CD4-positive, alpha-beta memory T cell (primary cell): ENCODE measurements at regions of chr18 and their contacts with region 1.

Region 1: GRCh38 chr18:63131106-63131958 is 188.2 kb downstream of the BCL2 start:
- DNase-seq: peak; percentile 61 to 73 (median 69)
- H3K4me3 ChIP-seq: no peak overlapping the region
- H3K4me3 Mint-ChIP-seq: peak overlapping the region in 5 of 8 donors; percentile 2 to 78 (median 53)
- H3K27ac ChIP-seq: peak overlapping the region; percentile 13
- H3K27ac Mint-ChIP-seq: peak overlapping the region; percentile 84 to 90 (median 89)
- H3K4me1 ChIP-seq: peaks cover 34% of the 10 kb centered on the region
- H3K4me1 Mint-ChIP-seq: peaks cover 31 to 47% (median 34%) of the 10 kb centered on the region in 4 donors
- H3K27me3 ChIP-seq: no peaks in the 10 kb centered on the region
- H3K27me3 Mint-ChIP-seq: no peaks in the 10 kb centered on the region

Region 2: DNA sequence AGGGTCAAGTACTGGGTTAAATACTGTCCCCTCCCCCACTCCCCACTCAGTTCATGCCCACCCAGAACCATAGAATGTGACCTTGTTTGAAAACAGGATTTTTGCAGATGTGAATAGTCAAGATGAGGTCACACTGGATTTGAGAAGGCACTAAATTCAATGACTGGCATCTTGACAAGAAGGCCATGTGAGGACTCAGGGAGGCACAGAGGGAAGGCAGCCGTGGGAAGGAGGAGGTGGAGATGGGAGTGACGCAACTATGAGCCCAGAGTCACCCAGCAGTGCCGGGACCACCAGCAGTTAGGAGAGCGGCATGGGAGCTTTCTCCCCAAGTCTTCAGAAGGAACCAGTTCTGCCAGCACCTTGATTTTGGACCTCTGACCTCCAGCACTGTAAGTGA is 69.1 kb before region 1 on chr18:
- CTCF ChIA-PET with region 1: no interaction called
- POLR2A ChIA-PET with region 1: no interaction called
- intact Hi-C with region 1: no loop called
- DNase-seq: no peak
- H3K4me3 ChIP-seq: no peak overlapping the region
- H3K4me3 Mint-ChIP-seq: no peak overlapping the region
- H3K27ac ChIP-seq: no peak overlapping the region
- H3K27ac Mint-ChIP-seq: no peak overlapping the region
- H3K4me1 ChIP-seq: no peaks in the 10 kb centered on the region
- H3K4me1 Mint-ChIP-seq: no peaks in the 10 kb centered on the region
- H3K27me3 ChIP-seq: no peaks in the 10 kb centered on the region
- H3K27me3 Mint-ChIP-seq: peaks cover 5% of the 10 kb centered on the region in 2 donors

Region 3: GRCh38 chr18:63119647-63120046 is 11.7 kb before region 1 on chr18:
- CTCF ChIA-PET with region 1: interaction called, 11 read pairs
- POLR2A ChIA-PET with region 1: interaction called, 4 read pairs
- intact Hi-C with region 1: no loop called
- DNase-seq: no peak
- H3K4me3 ChIP-seq: no peak overlapping the region
- H3K4me3 Mint-ChIP-seq: no peak overlapping the region
- H3K27ac ChIP-seq: no peak overlapping the region
- H3K27ac Mint-ChIP-seq: peak overlapping the region in 1 of 7 donors; percentile 82
- H3K4me1 ChIP-seq: no peaks in the 10 kb centered on the region
- H3K4me1 Mint-ChIP-seq: peaks cover 3 to 9% (median 4%) of the 10 kb centered on the region in 4 donors
- H3K27me3 ChIP-seq: no peaks in the 10 kb centered on the region
- H3K27me3 Mint-ChIP-seq: peaks cover 0 to 3% of the 10 kb centered on the region in 2 donors

Region 4: DNA sequence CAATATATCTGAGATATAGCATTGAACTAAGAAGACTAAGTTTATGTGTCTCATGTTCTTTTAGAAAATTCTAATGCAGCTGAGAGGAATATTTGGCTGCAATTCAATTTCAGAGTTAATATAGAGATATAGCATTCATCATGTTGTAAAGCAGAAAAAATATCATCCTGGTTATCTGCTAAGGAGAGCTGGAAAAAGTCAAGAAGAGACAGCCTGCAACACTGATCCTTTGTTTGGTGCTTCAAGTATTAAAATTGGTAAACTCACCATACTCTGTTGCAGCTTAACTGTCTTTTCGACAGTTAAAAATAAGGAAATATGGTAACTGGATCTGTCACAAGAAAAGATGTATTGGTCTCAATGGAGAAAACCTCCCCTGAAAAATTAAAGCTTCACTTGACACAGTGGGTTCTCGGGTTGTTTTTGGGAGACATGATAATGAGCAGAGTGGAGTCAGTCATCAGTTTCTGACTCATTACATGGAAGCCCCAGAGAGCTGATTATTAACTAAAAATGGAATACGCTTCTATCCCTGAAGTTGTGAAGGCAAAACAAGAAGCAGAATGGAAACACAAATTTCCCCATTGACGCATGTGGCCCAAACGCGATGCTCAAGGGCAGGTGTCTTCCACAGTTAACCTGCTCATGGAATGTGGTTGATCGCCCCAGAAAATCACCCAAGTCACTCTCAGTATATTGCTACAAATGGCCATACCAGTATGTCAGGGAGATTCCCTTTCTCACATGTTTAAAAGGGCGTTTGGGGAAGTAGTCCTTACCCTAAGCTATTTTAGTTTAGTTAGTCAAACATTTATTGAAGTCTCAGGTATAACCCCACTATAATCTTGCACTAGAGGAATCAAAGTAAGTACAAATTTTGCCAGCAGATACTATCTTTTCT is 180.0 kb after region 1 on chr18:
- CTCF ChIA-PET with region 1: interaction called, 11 read pairs
- POLR2A ChIA-PET with region 1: interaction called, 5 read pairs
- intact Hi-C with region 1: no loop called
- DNase-seq: no peak
- H3K4me3 ChIP-seq: no peak overlapping the region
- H3K4me3 Mint-ChIP-seq: peak overlapping the region in 7 of 8 donors; percentile 26 to 92 (median 69)
- H3K27ac ChIP-seq: peak overlapping the region; percentile 14
- H3K27ac Mint-ChIP-seq: peak overlapping the region; percentile 51 to 94 (median 80)
- H3K4me1 ChIP-seq: peaks cover 96% of the 10 kb centered on the region
- H3K4me1 Mint-ChIP-seq: peaks cover 61 to 96% (median 82%) of the 10 kb centered on the region in 4 donors
- H3K27me3 ChIP-seq: no peaks in the 10 kb centered on the region
- H3K27me3 Mint-ChIP-seq: no peaks in the 10 kb centered on the region

Region 5: DNA sequence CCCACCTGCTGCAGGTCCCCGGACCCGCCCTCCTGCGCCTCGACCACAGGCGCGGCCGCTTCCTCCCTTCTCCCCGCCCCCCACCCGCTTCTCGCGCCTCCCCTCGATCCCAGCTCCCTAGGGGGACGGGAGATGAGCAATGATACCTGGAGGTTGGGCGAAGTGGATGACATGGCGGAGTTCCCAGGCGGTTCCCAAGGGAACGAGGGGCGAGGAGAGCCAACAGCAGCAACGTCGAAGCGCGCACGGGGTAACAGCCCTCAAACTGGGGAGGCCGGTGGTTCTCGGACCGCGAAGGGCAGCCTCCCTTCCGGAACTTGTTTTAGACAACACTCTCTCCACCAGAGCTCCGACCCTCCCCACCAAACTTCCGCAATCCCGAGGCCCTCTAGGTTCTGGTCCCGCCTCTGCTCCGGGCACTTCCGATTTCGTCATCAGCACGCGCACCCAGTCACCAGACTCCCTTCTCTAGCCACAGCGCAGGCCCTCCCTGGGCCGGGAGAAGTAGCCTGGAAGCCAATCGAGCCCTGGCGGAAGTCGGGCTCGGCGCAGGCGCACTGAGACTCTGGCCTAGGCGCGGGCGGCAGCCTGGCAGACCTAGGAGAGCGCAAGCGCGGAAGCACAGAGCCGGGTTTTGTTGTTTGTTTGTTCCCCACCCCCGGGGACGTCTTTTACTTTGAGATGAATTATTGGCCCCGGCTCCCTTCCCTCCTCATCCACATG is 290.9 kb after region 1 on chr18 and contains the start of gene VPS4B:
- CTCF ChIA-PET with region 1: interaction called, 5 read pairs
- POLR2A ChIA-PET with region 1: interaction called, 5 read pairs
- intact Hi-C with region 1: loop called (anchors 5 kb)
- DNase-seq: peak; percentile 99 to 100 (median 100)
- H3K4me3 ChIP-seq: peak within 1 kb of the TSS; percentile 73 to 98
- H3K4me3 Mint-ChIP-seq: peak within 1 kb of the TSS; percentile 94 to 100 (median 96)
- H3K27ac ChIP-seq: peak within 1 kb of the TSS; percentile 98
- H3K27ac Mint-ChIP-seq: peak within 1 kb of the TSS; percentile 94 to 99 (median 97)
- H3K4me1 ChIP-seq: peaks cover 55% of the 10 kb centered on the region
- H3K4me1 Mint-ChIP-seq: peaks cover 19 to 29% (median 21%) of the 10 kb centered on the region in 4 donors
- H3K27me3 ChIP-seq: no peaks in the 10 kb centered on the region
- H3K27me3 Mint-ChIP-seq: peaks cover 3 to 5% of the 10 kb centered on the region in 2 donors
- total RNA-seq, gene VPS4B: 93.0 to 94.9 TPM